Activated CD4-positive, alpha-beta memory T cell treated with anti-CD3 and anti-CD28 coated beads, Interleukin-2, amount 10 ng/mL, durations not matched to agents 7 days and 5 days (primary cell): ENCODE measurements at regions of chr20 and their contacts with region 1.

Region 1: GRCh38 chr20:407133-407952 is 756 bp upstream of the RBCK1 start:
- DNase-seq: peak; percentile 77
- H3K4me3 Mint-ChIP-seq: peak overlapping the region; percentile 78
- H3K27ac Mint-ChIP-seq: peak overlapping the region; percentile 73
- H3K4me1 Mint-ChIP-seq: peaks cover 53% of the 10 kb centered on the region
- H3K27me3 Mint-ChIP-seq: no peaks in the 10 kb centered on the region

Region 2: GRCh38 chr20:313948-314347 is 93.4 kb before region 1 on chr20:
- CTCF ChIA-PET with region 1: no interaction called
- POLR2A ChIA-PET with region 1: no interaction called
- DNase-seq: no peak
- H3K4me3 Mint-ChIP-seq: no peak overlapping the region
- H3K27ac Mint-ChIP-seq: no peak overlapping the region
- H3K4me1 Mint-ChIP-seq: peaks cover 13% of the 10 kb centered on the region
- H3K27me3 Mint-ChIP-seq: peaks cover 2% of the 10 kb centered on the region

Region 3: DNA sequence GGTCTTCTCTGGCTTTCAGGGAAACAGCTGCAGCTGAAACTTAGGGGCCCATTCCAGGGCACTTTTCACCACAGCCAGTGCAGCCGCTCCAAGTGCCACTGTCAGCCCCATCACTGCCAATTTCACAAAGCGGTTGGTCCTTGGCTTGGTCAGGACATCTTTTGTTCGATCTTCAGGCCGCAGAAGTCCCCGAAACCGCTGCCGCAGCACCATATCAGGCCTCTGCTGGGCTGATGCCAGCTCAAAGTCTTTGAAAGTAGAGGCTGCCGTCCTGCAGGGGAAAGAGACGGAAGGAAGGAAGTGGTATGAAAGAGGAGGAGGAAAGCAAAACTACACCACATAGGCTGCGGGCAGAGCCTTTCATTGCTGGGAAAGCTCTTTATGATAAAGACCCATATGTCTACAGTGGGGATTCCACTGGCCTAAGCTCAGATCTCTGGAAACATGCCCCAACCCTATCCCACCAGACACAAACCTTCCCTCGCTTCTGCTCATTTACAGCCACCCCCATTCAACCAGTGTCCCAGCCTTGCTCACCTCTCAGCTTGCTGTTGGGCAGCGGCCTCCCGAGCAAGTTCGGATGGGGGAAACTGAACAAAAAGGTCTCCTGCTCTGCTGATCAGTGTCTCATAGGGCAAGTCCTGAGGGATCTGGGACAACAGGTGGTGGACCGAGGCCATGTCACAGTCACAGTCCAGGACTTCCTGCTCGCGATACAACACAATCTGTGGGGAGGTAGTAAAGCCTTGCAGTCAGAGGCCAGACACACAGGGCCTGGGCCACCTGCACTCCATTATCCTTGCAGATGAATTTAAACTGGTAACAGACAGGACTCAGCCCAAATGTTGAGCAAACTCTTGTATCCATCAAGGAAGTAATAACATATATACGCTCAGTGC is 31.5 kb after region 1 on chr20:
- CTCF ChIA-PET with region 1: interaction called, 6 read pairs
- POLR2A ChIA-PET with region 1: interaction called, 17 read pairs
- DNase-seq: peak; percentile 77
- H3K4me3 Mint-ChIP-seq: peak overlapping the region; percentile 62
- H3K27ac Mint-ChIP-seq: peak overlapping the region; percentile 83
- H3K4me1 Mint-ChIP-seq: peaks cover 60% of the 10 kb centered on the region
- H3K27me3 Mint-ChIP-seq: no peaks in the 10 kb centered on the region

Region 4: DNA sequence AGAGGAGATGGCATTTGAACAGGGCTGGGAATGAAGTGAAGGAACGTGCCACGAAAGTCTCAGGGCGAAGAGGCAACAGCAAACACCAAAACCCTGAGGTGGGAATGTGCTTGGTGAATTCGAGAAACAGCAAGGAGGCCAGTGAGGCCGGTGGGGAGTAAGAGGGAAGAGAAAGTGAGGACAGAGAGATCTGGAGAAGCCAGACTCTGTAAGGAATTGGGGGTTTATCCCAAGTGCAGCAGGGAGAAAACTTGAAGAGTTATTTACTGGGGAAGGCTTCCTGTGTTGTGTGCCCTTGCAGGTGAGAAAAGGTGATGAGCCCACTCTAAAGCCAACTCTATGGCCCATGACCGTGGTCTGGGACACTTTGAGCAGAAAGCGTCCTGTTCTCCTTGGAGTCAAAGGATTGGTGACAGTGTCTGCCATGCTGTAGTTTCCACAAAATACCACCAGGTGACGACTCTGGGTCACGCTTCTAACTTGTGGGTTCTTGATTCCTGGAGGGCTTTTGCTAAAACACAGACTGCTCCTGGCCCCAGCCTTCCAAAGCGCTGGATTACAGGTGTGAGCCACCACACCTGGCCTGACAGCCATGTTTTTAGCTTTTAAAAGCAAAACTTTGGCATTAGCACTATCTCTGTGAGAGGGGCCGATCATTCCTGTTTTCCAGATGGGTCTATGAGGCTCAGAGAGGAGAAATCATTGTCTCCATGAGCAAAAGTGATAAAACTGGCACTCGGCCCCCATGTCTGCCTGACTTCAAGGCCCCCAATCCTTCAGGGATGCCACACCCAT is 154.3 kb after region 1 on chr20:
- CTCF ChIA-PET with region 1: no interaction called
- POLR2A ChIA-PET with region 1: no interaction called
- DNase-seq: peak; percentile 59
- H3K4me3 Mint-ChIP-seq: no peak overlapping the region
- H3K27ac Mint-ChIP-seq: no peak overlapping the region
- H3K4me1 Mint-ChIP-seq: no peaks in the 10 kb centered on the region
- H3K27me3 Mint-ChIP-seq: peaks cover 12% of the 10 kb centered on the region